Activated CD4-positive, alpha-beta T cell treated with anti-CD3 and anti-CD28 coated beads for 36 hours (primary cell): ENCODE measurements at regions of chr12 and their contacts with region 1.

Region 1: GRCh38 chr12:76763743-76764675 is at the start of gene ZDHHC17:
- DNase-seq: peak; percentile 93
- ATAC-seq: peak; percentile 89
- H3K4me3 Mint-ChIP-seq: peak within 1 kb of the TSS; percentile 96
- H3K27ac Mint-ChIP-seq: peak within 1 kb of the TSS; percentile 97
- H3K4me1 Mint-ChIP-seq: peaks cover 41% of the 10 kb centered on the region
- H3K27me3 Mint-ChIP-seq: no peaks in the 10 kb centered on the region
- total RNA-seq, gene ZDHHC17: 17.6 to 22.7 TPM

Region 2: DNA sequence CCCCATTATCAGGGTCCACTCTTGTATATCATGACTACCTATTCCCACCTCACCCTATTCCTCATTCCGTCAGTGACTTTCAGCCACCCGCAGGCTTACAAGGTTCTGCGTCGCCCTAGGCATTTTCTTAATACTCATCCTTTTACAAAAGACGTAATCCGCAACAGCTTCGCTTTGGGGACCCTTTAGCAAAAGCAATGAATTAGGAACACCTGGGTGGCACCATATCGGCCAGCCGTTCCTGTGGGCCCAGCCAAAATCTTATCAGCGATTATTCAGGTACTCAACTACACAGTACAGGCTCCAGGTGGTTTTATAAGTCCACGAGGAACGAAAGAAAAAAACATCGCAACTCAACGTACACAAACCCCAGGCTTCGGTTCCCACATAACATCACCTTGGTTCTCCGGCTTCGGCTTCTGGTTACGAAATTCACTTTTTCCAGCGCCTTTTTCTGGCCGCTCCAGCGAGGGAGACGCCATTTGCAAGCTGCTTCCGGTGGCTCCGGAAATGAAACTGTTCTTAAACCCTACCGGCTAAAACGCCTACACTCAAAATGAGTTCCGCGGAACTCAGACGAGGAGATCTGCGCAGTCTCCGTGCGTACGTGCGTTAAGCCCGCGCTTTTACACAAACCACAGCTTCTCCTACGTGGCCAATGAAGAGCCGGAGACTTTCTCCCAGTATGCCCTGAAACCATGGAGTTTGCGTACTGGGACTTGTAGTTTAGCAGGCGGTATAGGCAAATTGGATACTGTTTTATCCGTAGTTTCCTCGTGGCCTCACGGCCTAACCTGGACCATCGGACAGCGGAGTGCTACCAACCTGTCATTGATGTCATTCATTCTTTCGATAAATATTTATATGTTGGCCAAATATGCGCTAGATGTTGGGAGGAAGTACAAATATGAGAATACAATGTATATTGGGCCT is 1252.6 kb before region 1 on chr12 and contains the start of gene KRR1:
- CTCF ChIA-PET with region 1: no interaction called
- POLR2A ChIA-PET with region 1: no interaction called
- intact Hi-C with region 1: loop called in 1 of 2 experiments (anchors 10 kb)
- DNase-seq: peak; percentile 94
- ATAC-seq: peak; percentile 96
- H3K4me3 Mint-ChIP-seq: peak within 1 kb of the TSS; percentile 100
- H3K27ac Mint-ChIP-seq: peak within 1 kb of the TSS; percentile 99
- H3K4me1 Mint-ChIP-seq: peaks cover 33% of the 10 kb centered on the region
- H3K27me3 Mint-ChIP-seq: no peaks in the 10 kb centered on the region
- total RNA-seq, gene KRR1: 122 to 147 TPM

Region 3: DNA sequence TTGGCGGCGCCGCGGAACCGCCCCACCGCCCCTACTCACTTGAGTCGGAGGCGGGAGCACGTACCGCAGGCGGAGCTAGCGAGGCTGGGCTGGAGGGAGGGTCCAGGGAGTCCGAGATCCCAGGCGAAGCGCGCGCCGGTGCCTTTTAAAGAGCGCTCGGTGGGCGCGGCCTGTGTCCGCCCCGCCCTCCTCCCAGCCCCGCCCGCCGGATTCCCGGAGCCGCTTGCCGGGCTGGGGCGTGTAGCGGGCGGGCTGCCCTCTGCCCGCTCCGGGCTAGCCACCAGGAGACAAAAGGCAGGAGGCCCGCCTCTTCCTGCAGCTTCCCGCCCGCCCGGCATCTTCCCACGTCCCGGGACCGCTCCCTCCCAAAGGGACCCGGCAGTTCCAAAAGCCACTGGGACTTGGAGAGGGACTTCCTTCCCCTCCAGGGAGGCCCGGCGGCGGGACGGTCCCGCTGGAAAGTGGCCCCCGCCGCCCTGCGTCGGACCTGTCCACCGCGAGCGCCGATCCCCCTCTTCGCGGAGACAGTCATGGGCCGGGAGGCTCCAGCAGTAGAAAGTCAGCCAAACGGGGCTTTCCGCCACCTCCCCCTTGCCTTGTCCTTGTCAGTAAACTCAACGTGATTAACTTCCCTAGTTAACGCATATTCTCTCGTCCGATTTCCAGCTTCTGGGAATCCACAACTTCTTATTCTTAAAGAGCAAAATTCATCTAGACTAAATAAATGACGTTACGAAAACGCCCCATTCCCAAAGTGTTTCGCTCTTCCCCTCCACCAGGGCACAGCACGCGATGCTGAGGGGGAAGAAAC is 115.1 kb after region 1 on chr12 and contains the start of gene CSRP2:
- CTCF ChIA-PET with region 1: no interaction called
- POLR2A ChIA-PET with region 1: no interaction called
- intact Hi-C with region 1: loop called in 1 of 2 experiments (anchors 2 kb)
- DNase-seq: peak; percentile 86
- ATAC-seq: peak; percentile 95
- H3K4me3 Mint-ChIP-seq: peak within 1 kb of the TSS; percentile 76
- H3K27ac Mint-ChIP-seq: peak within 1 kb of the TSS; percentile 23
- H3K4me1 Mint-ChIP-seq: peaks cover 14% of the 10 kb centered on the region
- H3K27me3 Mint-ChIP-seq: peaks cover 37% of the 10 kb centered on the region
- total RNA-seq, gene CSRP2: 1.8 to 2.0 TPM

Region 4: GRCh38 chr12:77065361-77066204 is 301.6 kb after region 1 on chr12 and contains the start of gene E2F7:
- CTCF ChIA-PET with region 1: no interaction called
- POLR2A ChIA-PET with region 1: no interaction called
- intact Hi-C with region 1: loop called in 1 of 2 experiments (anchors 1 kb)
- DNase-seq: peak; percentile 92
- ATAC-seq: peak; percentile 96
- H3K4me3 Mint-ChIP-seq: peak within 1 kb of the TSS; percentile 76
- H3K27ac Mint-ChIP-seq: peak within 1 kb of the TSS; percentile 63
- H3K4me1 Mint-ChIP-seq: peaks cover 11% of the 10 kb centered on the region
- H3K27me3 Mint-ChIP-seq: peaks cover 23% of the 10 kb centered on the region
- total RNA-seq, gene E2F7: 6.0 to 7.8 TPM